ENCODE measurements at regions of chrX and their contacts with region 1.

Region 1: GRCh38 chrX:25144043-25144940 is 128.5 kb upstream of the ARX start:
- DNase-seq: peak; percentile 29 to 76
- ATAC-seq: peak; percentile 52

Region 2: DNA sequence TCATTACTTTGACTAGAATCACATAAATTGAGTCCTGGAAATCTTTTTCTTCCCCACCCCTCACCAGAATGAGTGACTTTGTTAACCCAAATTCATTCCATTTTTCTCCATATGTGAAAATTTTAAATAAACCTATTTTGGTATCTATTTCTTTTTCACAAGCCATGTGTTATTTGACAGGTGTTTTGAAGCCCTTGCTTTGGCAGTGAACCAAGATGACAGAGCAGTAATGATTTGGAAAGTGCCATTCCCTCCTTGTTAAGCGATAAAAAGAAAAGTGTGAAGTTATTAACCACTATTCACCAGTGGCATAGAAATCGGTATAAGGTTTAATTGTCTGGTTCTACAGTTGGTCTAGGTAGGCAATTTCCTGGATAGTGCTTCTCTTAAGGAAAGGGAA is 384.5 kb before region 1 on chrX:
- intact Hi-C with region 1: loop called in 1 of 2 experiments (anchors 10 kb)
- DNase-seq: no peak
- ATAC-seq: no peak

Region 3: DNA sequence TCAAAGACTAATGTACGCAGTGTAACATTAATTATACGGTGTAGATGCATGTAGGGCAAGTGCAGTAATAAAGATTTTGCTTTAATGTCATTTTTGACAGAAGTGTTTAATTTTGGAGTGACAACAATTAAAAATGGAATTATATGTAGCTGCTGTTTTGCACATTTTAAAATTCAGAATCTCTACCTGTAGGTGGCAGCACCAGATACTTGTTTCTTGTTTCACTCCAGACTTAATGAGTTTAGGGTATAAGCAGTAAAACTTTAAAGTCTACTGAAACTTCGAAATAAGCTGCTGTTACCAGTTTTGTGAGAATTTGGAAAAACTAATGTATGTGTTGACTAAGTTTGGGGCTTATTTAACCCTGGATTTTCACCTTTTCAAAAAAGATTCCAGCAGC is 305.7 kb before region 1 on chrX:
- intact Hi-C with region 1: loop called in 1 of 2 experiments (anchors 5 kb)
- DNase-seq: no peak
- ATAC-seq: peak; percentile 44